ENCODE measurements at regions of chr6 and their contacts with region 1.

Region 1: GRCh38 chr6:10694302-10695085 is at the starts of genes C6orf52 and PAK1IP1:
- DNase-seq: peak; percentile 90 to 93 (median 93)
- H3K4me3 ChIP-seq: peak within 1 kb of the TSS; percentile 88 to 93 (median 88)
- H3K4me3 Mint-ChIP-seq: peak within 1 kb of the TSS; percentile 95 to 100
- H3K27ac ChIP-seq: peak within 1 kb of the TSS; percentile 86 to 97
- H3K27ac Mint-ChIP-seq: peak within 1 kb of the TSS; percentile 99 to 100 (median 100)
- H3K4me1 ChIP-seq: peaks cover 37% of the 10 kb centered on the region in 2 donors
- H3K4me1 Mint-ChIP-seq: peaks cover 35% of the 10 kb centered on the region
- H3K27me3 ChIP-seq: no peaks in the 10 kb centered on the region
- H3K27me3 Mint-ChIP-seq: peaks cover 0 to 3% (median 0%) of the 10 kb centered on the region in 3 donors
- CTCF ChIP-seq: no peak
- polyA plus RNA-seq, gene C6orf52: 0.52 to 1.9 TPM in 2 of 3 donors, not detected in the other
- polyA plus RNA-seq, gene PAK1IP1: 6.2 to 13.3 (median 11.7) TPM

Region 2: DNA sequence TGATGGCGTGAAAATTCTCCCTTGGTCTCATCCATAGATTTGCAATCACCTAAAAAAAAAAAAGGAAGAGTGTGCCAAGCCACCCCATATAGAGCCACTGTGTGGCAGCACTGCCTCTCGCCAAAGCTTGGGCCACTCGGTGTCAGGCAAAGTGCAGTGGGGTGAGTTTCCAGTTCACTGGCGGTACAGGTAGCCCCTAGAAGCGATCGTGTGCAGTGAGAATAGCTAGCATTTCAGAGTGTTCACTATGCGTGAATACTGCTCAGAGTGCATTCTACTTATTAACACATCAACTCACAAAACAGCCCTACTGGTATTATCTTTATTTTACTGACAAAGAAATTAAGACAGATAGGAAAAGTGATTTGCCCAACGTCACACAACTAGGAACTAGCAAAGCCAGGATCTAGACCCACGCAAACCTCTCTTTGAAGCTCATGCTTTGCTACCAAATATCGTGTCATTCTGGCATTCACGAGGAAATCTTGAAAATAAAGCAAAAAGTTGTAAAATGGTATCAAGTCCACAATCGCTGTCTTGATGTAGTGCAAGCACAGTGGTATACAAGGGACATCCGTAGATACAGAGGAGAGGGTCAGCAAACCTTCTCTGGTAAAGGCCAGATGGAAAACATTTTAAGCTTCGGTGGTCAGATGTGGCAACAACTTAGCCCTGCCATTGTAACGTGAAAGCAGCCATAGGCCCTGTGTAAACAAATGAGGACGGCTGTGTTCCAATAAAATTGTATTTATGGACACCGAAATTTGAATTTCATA is 183.7 kb before region 1 on chr6:
- intact Hi-C with region 1: loop called (anchors 2 to 10 kb)
- DNase-seq: peak; percentile 56 to 71 (median 69)
- H3K4me3 ChIP-seq: peak overlapping the region in 1 of 3 experiments; percentile 53
- H3K4me3 Mint-ChIP-seq: peak overlapping the region; percentile 47 to 67
- H3K27ac ChIP-seq: no peak overlapping the region
- H3K27ac Mint-ChIP-seq: peak overlapping the region in 3 of 7 donors; percentile 62 to 67 (median 66)
- H3K4me1 ChIP-seq: peaks cover 5% of the 10 kb centered on the region in 2 donors
- H3K4me1 Mint-ChIP-seq: peaks cover 10% of the 10 kb centered on the region
- H3K27me3 ChIP-seq: no peaks in the 10 kb centered on the region
- H3K27me3 Mint-ChIP-seq: peaks cover 0 to 1% (median 0%) of the 10 kb centered on the region in 3 donors
- CTCF ChIP-seq: peak; percentile 80

Region 3: DNA sequence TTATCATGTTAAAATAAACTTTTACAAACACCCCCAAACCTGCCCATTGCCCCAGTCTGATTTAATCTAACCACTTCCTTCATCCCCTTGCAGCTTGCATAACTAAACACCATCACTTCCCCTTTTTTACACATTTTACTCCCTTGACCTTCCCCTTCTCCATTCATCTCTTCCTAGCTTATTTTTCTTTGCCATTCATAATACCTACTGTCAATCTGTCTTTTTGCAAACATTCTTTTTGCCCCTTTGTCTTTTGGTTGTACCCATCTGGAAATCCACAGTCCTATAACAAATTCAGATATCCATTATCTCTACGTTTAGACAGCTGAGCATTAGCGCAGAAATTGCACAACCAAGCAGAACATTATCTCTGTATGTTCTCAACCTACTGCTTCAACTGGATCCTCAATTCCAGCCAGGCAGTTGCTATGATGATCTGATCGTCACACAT is 51.3 kb before region 1 on chr6:
- intact Hi-C with region 1: loop called in 1 of 2 experiments (anchors 5 kb)
- DNase-seq: peak; percentile 67 to 80 (median 79)
- H3K4me3 ChIP-seq: peak overlapping the region in 2 of 3 experiments; percentile 9 to 57
- H3K4me3 Mint-ChIP-seq: peak overlapping the region in 1 of 2 donors; percentile 77
- H3K27ac ChIP-seq: peak overlapping the region in 1 of 2 donors; percentile 60
- H3K27ac Mint-ChIP-seq: peak overlapping the region; percentile 58 to 92 (median 87)
- H3K4me1 ChIP-seq: peaks cover 34 to 35% of the 10 kb centered on the region in 2 donors
- H3K4me1 Mint-ChIP-seq: peaks cover 40% of the 10 kb centered on the region
- H3K27me3 ChIP-seq: no peaks in the 10 kb centered on the region
- H3K27me3 Mint-ChIP-seq: peaks cover 0 to 2% (median 2%) of the 10 kb centered on the region in 3 donors
- CTCF ChIP-seq: no peak

Region 4: DNA sequence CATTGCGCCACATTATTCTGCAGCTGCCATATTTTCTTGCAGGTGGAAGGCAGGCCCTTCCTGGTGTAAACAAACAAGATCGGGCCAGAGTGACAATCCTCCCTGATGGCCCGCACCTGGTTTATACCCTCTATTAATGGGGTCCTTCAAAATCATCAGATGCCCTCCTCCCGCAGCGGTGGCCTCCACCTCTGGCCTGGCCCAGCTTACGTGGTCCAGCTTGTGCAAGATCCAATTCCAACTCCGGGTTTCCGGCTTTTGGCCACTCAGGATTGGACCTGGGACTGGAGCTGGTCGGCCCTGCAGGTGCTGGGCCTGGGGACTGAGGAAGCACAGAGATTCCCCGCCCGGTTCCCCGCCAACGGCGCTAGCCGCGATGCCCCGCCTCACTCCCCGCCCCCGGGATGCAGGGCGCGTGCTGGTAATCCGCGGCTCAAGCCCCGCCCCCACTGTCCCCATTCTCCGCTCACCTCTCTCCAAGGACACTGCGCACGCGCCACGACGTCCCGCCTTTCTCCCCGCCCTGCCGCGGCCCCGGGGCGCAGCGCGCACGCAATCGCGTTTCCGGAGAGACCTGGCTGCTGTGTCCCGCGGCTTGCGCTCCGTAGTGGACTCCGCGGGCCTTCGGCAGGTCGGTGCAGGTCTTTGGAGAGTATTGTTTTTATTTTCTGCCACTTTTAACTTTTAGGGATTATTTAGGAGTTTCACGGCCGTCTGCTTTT is 52.9 kb after region 1 on chr6 and contains the start of gene TMEM14B:
- intact Hi-C with region 1: loop called (anchors 2 to 5 kb)
- DNase-seq: peak; percentile 96 to 99 (median 97)
- H3K4me3 ChIP-seq: peak within 1 kb of the TSS; percentile 56 to 87 (median 81)
- H3K4me3 Mint-ChIP-seq: peak within 1 kb of the TSS; percentile 89 to 97
- H3K27ac ChIP-seq: peak within 1 kb of the TSS; percentile 69 to 97
- H3K27ac Mint-ChIP-seq: peak within 1 kb of the TSS; percentile 88 to 96 (median 94)
- H3K4me1 ChIP-seq: peaks cover 17 to 27% of the 10 kb centered on the region in 2 donors
- H3K4me1 Mint-ChIP-seq: peaks cover 29% of the 10 kb centered on the region
- H3K27me3 ChIP-seq: no peaks in the 10 kb centered on the region
- H3K27me3 Mint-ChIP-seq: peaks cover 0 to 2% (median 2%) of the 10 kb centered on the region in 3 donors
- CTCF ChIP-seq: no peak
- polyA plus RNA-seq, gene TMEM14B: 38.8 to 185 (median 141) TPM